ENCODE measurements at regions of chr2 and their contacts with region 1.

Region 1: DNA sequence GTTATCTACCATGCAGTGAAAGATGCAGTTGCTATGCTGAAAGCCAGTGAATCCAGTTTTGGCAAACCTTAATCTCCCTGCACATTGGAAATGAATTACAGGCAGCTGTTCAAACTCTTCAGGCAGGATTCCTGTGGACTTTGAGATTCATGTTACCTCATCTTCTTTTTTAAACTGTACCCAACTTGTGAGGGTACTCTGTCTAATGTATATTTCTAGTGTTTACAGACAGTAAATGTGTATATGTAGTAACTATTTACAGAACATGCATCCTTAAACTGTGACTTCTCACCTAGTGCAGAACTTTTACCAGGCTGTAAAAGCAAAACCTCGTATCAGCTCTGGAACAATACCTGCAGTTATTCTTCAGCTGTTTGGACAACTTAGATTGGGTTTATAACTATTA is 50.9 kb downstream of the KDM3A start:
- DNase-seq: no peak

Region 2: DNA sequence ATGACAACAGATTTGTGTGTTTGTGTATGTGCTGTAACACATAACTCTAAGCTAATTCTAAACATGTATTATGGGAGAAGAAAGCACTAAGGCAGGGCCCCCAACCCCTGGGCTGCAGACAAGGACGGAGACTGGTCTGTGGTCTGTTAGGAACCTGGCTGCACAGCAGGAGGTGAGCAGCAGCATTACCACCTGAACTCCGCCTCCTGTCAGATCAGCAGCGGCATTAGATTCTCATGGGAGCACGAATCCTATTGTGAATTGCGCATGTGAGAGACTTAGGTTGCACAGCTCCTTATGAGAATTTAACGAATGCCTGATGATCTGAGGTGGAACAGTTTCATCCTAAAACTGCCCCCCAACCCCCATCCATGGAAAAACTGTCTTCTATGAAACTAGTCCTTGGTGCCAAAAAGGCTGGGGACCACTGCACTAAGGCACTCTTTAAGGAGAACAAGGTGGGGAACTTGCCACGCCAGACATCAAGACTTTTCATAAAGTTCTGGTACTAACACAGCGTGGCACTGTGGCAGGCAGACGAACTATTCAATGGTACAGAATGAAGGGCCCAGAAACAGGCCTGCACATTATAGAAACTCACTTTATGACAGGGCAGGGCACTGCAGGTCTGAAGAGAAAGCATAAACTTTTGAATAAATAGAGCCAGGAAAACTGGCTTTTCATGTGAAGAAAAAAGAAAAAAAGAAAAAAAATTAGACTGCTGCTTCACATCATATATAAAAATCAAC is 168.6 kb before region 1 on chr2:
- in situ Hi-C with region 1: no loop called
- DNase-seq: no peak

Region 3: DNA sequence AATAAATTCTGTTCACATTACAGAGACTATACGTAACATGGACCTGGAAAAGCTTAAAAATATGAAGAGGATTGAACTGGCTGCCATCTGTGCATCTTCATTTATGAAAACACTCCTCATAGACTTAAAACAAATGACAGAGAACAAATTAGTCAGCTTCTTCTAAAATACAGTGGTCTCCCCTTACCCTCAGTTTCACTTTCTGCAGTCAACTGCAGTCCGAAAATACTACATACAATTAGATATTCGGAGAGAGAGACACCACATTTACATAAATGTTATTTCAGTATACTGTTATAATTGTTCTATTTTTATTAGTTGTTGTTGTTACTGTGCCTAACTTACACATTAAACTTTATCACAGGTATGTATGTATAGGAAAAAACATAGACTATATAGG is 125.1 kb after region 1 on chr2:
- in situ Hi-C with region 1: loop called (anchors 10 kb)
- DNase-seq: no peak

Measured in Caki2 (cell line).